MCF 10A (cell line): ENCODE measurements at regions of chr7 and their contacts with region 1.

Region 1: GRCh38 chr7:7681179-7681935 is 37.0 kb downstream of the RPA3 start:
- DNase-seq: peak; percentile 77
- H3K4me3 Mint-ChIP-seq: no peak overlapping the region
- H3K27ac Mint-ChIP-seq: peak overlapping the region; percentile 75
- H3K4me1 Mint-ChIP-seq: peaks cover 15% of the 10 kb centered on the region
- H3K27me3 Mint-ChIP-seq: no peaks in the 10 kb centered on the region
- CTCF ChIP-seq: peak; percentile 47

Region 2: DNA sequence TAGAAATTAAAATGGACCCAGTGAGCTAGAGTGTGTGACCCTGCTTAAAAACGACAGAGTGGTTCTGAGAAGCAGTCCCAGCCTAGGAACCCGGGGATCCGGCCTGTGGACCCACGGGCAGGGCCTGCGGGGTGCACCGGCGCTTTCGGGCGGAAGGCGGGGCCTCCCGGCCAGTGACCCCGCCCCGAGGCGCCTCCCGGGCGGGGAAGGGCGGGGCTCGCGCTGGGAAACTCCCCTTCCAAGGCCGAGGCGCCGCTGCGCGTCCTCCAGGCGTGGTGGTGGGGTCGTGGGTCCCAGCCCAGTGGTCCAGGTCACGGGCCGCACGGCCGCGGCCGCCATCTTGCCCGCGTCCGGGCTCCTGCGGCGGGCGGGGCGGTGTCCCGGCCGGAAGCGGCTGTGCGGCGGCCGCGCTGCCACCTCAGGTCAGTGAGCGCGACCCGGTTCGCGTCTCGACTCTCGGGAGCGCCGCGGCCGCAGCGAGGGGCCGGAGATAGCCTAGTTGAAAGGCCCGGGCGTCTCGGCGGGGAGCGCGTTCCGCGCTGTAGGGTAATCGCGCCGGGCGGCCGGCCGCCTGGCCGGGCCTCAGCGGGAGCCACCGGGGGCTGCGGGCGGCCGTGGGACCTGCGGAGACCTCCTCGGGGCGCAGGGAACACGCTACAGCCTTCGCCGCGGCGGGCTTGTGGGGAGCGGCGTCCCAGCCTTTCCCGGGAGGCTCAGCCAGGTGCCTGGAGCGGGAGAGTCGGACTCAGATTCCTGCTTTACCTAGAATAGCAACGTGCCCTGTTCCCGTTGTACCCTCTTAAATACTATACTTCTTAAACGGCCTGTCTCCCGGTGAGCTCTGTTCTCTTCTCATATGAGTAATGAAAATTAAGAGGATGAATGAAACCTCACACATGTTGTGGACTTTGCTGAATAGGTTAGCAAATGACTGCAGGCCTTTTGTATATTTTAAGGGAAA is 114.4 kb before region 1 on chr7 and contains the start of gene MIOS:
- CTCF ChIA-PET with region 1: no interaction called
- POLR2A ChIA-PET with region 1: no interaction called
- intact Hi-C with region 1: no loop called
- DNase-seq: peak; percentile 81
- H3K4me3 Mint-ChIP-seq: no peak within 1 kb of the TSS
- H3K27ac Mint-ChIP-seq: peak within 1 kb of the TSS; percentile 72
- H3K4me1 Mint-ChIP-seq: peaks cover 17% of the 10 kb centered on the region
- H3K27me3 Mint-ChIP-seq: no peaks in the 10 kb centered on the region
- CTCF ChIP-seq: no peak
- total RNA-seq, gene MIOS: 43.5 and 65.4 TPM in 2 replicates

Region 3: GRCh38 chr7:7696458-7697119 is 15.2 kb after region 1 on chr7:
- CTCF ChIA-PET with region 1: interaction called, 24 read pairs
- POLR2A ChIA-PET with region 1: interaction called, 6 read pairs
- intact Hi-C with region 1: no loop called
- DNase-seq: peak; percentile 27
- H3K4me3 Mint-ChIP-seq: peak overlapping the region; percentile 28
- H3K27ac Mint-ChIP-seq: peak overlapping the region; percentile 95
- H3K4me1 Mint-ChIP-seq: peaks cover 25% of the 10 kb centered on the region
- H3K27me3 Mint-ChIP-seq: no peaks in the 10 kb centered on the region
- CTCF ChIP-seq: no peak

Region 4: DNA sequence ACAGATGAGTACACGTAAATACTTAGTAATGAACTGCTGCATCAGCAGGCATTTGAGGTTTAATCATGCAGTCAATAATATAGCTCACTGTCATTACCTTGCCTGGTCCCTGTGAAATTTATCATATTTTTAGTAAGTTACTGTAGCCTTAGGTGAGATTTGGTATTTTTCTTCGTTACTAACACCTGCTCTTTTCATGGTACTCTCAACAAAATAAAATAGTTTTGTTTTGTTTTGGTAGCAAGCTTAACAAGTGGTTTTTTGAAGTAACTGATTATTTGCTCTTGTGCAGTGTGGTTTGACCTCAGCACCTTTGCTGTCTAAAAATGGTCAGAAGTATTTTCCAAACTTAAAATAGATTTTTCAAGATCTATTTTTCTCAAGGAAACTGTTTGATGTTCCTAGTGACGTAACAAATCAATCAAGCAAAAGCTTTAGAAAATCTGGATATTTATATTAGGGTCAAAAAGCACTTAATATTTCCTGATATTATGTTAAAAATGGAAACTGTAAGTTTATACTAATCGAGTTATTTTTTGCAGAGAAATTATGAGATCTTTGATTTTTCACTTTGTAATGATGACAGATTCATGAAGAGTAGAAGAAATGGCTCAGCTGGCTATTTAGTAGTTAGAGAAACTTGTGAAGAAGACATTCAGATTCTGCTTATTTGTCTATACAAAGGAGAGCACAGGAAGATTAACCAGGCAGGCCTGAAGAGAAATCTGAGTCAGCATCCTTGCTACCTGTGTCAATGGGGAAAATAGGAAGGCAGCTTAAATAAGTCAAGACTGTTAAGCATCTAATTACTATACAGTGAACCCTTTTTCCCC is 58.1 kb after region 1 on chr7:
- CTCF ChIA-PET with region 1: no interaction called
- POLR2A ChIA-PET with region 1: no interaction called
- intact Hi-C with region 1: loop called (anchors 5 kb)
- DNase-seq: no peak
- H3K4me3 Mint-ChIP-seq: no peak overlapping the region
- H3K27ac Mint-ChIP-seq: no peak overlapping the region
- H3K4me1 Mint-ChIP-seq: no peaks in the 10 kb centered on the region
- H3K27me3 Mint-ChIP-seq: no peaks in the 10 kb centered on the region
- CTCF ChIP-seq: no peak

Region 5: GRCh38 chr7:7861211-7861633 is 179.9 kb after region 1 on chr7:
- CTCF ChIA-PET with region 1: no interaction called
- POLR2A ChIA-PET with region 1: interaction called, 3 read pairs
- intact Hi-C with region 1: loop called (anchors 1 kb)
- DNase-seq: peak; percentile 81
- H3K4me3 Mint-ChIP-seq: no peak overlapping the region
- H3K27ac Mint-ChIP-seq: peak overlapping the region; percentile 89
- H3K4me1 Mint-ChIP-seq: peaks cover 11% of the 10 kb centered on the region
- H3K27me3 Mint-ChIP-seq: no peaks in the 10 kb centered on the region
- CTCF ChIP-seq: no peak

Region 6: DNA sequence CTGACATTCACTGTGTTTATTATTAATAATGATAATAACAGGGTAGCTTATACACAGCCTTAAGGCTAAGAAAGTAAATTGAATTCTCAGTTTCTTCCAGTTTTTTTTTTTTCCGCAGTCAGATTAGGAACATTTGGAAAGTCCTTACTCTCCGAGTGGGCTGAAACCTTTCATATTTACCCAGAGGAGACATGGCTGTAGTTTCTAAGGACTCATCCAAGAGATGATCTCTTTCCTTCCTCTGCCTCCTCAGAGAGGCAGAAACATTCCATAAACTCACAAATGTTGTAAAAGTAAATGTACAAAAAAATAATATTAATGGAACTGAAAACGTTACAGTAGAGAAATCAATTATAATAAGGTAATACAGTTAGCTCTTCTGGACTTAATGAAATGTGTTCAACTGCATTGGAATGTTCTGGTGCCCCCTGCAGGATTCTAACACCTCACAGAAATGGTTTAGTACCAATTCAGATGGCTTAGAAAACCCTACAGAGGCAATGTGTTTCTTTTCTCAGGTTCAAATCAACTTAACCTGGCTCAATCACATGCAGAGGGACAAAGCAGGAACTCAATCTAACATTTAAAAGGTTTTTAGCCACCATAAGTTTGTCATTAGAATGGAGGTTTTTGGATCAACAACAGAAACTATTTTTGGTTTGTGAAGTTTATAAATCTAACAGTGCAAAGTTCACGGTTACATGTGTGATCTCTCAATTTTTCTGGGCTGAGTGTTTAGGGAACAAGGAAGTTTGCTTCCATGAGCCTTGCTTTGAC is 508.9 kb after region 1 on chr7:
- CTCF ChIA-PET with region 1: interaction called, 19 read pairs
- POLR2A ChIA-PET with region 1: no interaction called
- intact Hi-C with region 1: loop called (anchors 1 kb)
- DNase-seq: peak; percentile 59
- H3K4me3 Mint-ChIP-seq: no peak overlapping the region
- H3K27ac Mint-ChIP-seq: no peak overlapping the region
- H3K4me1 Mint-ChIP-seq: no peaks in the 10 kb centered on the region
- H3K27me3 Mint-ChIP-seq: no peaks in the 10 kb centered on the region
- CTCF ChIP-seq: peak; percentile 39